ENCODE measurements at regions of chr1 and their contacts with region 1.

Region 1: DNA sequence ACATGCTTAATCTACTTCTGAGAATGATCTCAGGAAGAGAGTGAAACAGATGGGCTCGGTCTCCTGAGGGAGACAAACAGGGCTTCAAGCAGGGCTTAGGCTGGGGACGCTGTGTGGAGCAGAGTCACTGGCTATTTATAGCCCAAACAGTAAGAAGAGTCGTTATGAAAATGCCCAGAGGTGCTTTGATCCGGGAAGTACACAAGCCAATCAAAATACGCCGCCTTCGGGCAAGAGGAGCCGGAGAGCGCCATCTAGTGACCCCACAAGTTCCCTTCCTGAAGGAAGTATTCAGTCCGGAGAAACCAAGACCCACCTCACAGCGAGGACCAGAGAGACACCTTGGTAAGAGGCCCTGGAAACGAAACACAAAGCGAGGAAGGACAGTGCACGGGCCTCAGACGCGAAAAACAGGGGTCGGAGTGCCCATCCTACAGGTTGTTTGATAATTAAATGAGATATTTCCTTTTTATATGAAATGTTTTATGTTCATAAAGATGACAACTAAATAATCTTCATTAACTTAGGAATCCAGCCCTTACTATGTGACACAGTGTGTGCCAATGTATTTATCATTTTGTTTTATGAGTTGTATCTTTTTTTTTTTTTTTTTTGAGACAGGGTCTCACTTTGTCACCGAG is 25.0 kb upstream of the SCCPDH start:
- DNase-seq: peak; percentile 84 to 95
- ATAC-seq: peak; percentile 61

Region 2: GRCh38 chr1:246497331-246497915 is 201.8 kb before region 1 on chr1:
- intact Hi-C with region 1: loop called in 1 of 2 experiments (anchors 5 kb)
- DNase-seq: no peak
- ATAC-seq: peak; percentile 52

Region 3: GRCh38 chr1:246518441-246519205 is 180.6 kb before region 1 on chr1:
- intact Hi-C with region 1: loop called in 1 of 2 experiments (anchors 10 kb)
- DNase-seq: no peak
- ATAC-seq: no peak

Region 4: DNA sequence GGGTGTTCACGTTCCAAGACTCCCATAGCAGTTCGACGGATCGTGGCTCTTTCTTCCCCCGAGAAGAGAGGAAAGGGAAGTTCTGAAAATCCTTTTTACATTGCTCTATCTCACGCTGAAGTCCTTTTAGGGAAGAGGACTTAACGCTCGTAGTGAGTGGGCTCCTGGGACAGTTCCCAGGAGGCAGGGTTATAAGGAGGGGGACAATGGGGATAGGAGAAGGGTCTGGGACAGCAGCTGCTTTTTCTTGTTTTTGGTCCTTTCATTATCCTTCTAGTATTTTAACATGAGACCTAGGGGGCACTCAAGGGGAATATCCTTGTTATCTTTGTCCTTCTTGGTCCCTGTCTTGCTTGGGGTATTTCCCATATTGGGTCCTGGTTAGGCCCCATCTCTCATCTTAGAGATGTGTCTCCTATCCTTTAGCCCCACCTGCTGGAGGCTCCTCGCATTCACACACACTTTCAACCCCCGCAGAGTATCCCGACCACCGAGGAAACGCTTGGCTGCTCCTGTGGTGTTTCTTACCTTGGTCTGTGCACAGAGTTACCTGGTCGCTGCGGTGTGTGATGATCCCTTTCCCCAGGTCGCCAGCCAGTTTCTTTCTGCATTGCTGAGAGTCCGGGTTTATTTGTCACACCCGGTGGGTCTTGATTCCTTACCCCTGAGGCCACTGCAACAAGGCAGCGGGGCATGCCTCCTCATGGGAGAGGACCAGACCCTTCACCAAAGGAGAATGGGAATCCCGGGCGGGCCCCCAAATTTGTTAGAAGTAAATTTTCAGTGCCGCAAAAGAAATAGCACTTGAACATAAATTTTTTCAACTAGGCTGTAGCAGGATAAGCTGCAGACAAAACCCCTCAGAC is 54.7 kb after region 1 on chr1:
- intact Hi-C with region 1: loop called in 1 of 2 experiments (anchors 10 kb)
- DNase-seq: peak; percentile 43 to 67
- ATAC-seq: peak; percentile 79

Region 5: GRCh38 chr1:246769306-246769705 is 70.1 kb after region 1 on chr1:
- intact Hi-C with region 1: no loop called
- DNase-seq: peak in 1 of 2 donors; percentile 54
- ATAC-seq: no peak

Region 6: DNA sequence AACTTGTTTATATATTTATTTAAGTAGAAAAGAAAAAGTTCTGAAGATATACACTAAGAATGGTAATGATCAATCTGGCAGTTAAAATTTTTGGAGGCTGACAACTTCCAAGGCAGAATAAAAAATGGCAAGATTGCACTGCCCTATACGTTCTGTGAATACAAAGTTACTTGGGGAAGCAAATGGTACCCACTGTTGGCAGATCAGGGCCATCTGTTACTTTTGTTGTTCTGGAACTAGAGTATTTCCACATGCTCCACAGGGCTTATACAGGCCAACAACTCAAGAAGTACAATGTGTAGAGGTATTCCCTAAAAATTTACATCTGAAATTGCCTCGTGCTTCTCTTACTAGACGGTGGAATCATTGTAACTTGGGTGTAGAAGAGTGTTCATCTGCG is 179.3 kb after region 1 on chr1:
- intact Hi-C with region 1: no loop called
- DNase-seq: no peak
- ATAC-seq: no peak

Measured in left colon (tissue), 2 donors.